ENCODE measurements at regions of chr3 and their contacts with region 1.

Region 1: DNA sequence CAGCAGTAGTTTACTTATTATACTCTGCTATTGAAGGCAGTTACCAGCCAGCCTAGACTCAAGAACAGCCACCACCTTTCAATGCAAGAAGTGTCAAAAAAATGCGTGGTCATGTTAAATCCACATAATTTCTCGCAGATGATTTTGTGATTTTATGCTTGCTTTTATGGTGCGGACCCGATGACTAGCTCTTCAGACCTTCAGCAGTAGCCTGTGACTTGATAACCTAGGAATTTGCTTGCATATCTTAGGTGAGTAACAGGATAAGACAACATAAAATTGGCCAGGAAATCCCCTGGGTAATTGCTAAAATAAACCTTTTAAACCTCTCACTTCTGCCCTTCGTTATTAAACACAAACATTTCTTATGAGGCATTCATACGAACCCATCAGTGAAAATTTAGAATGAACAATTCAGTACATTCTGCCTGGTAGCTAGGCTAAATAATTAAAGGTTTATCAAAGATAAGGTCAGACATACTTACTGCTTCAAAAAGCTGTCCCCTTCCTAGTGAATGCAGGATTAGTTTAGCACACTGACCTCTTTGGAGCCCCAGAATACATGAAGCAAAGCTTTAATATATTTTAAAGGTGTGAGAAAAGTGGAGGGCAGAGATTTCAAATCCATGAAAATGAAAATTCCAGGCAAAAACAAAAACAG is 798.8 kb downstream of the OTOL1 start:
- DNase-seq: peak; percentile 97
- ATAC-seq: peak; percentile 97
- H3K4me3 ChIP-seq: peak overlapping the region; percentile 31; the same call in 1 of the 2 replicates
- H3K27ac ChIP-seq: peak overlapping the region; percentile 84
- H3K4me1 ChIP-seq: peaks cover 40% of the 10 kb centered on the region
- H3K27me3 ChIP-seq: no peaks in the 10 kb centered on the region
- CTCF ChIP-seq: no peak

Region 2: DNA sequence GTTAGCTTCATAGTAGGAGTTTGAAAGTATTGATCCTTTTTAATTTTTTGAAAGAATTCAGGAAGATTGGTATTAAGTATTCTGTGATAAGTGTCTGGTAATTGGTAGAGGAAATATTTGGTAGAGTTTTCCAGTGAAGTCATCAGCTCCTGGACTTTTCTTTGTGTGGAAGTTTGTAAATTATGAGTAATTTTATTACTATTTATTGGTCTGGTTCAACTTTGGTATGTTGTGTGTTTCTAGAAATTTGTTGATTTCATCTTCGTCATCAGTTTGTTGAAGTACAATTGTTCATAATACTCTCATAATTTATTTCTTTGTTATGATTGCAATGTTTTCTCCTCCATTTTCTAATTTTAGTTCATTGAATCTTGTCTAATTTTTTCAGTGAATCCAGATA is 33.2 kb after region 1 on chr3:
- CTCF ChIA-PET with region 1: no interaction called
- POLR2A ChIA-PET with region 1: no interaction called
- intact Hi-C with region 1: loop called (anchors 2 kb)
- DNase-seq: peak; percentile 59
- ATAC-seq: peak; percentile 53
- H3K4me3 ChIP-seq: no peak overlapping the region
- H3K27ac ChIP-seq: peak overlapping the region; percentile 13
- H3K4me1 ChIP-seq: peaks cover 31% of the 10 kb centered on the region
- H3K27me3 ChIP-seq: no peaks in the 10 kb centered on the region
- CTCF ChIP-seq: no peak

Region 3: GRCh38 chr3:162376761-162377160 is 81.3 kb after region 1 on chr3:
- CTCF ChIA-PET with region 1: no interaction called
- POLR2A ChIA-PET with region 1: no interaction called
- intact Hi-C with region 1: loop called (anchors 5 kb)
- DNase-seq: peak; percentile 69
- ATAC-seq: peak; percentile 75
- H3K4me3 ChIP-seq: no peak overlapping the region; the same call in 1 of the 2 replicates
- H3K27ac ChIP-seq: peak overlapping the region; percentile 66
- H3K4me1 ChIP-seq: peaks cover 13% of the 10 kb centered on the region
- H3K27me3 ChIP-seq: no peaks in the 10 kb centered on the region
- CTCF ChIP-seq: no peak

Region 4: GRCh38 chr3:162390891-162391290 is 95.4 kb after region 1 on chr3:
- CTCF ChIA-PET with region 1: no interaction called
- POLR2A ChIA-PET with region 1: no interaction called
- intact Hi-C with region 1: loop called (anchors 2 kb)
- DNase-seq: peak; percentile 94
- ATAC-seq: peak; percentile 94
- H3K4me3 ChIP-seq: peak overlapping the region; percentile 45
- H3K27ac ChIP-seq: peak overlapping the region; percentile 95
- H3K4me1 ChIP-seq: peaks cover 25% of the 10 kb centered on the region
- H3K27me3 ChIP-seq: no peaks in the 10 kb centered on the region
- CTCF ChIP-seq: no peak

Region 5: GRCh38 chr3:162418153-162418552 is 122.7 kb after region 1 on chr3:
- CTCF ChIA-PET with region 1: no interaction called
- POLR2A ChIA-PET with region 1: no interaction called
- intact Hi-C with region 1: no loop called
- DNase-seq: no peak
- ATAC-seq: no peak
- H3K4me3 ChIP-seq: no peak overlapping the region
- H3K27ac ChIP-seq: no peak overlapping the region
- H3K4me1 ChIP-seq: no peaks in the 10 kb centered on the region
- H3K27me3 ChIP-seq: no peaks in the 10 kb centered on the region
- CTCF ChIP-seq: no peak

Region 6: GRCh38 chr3:162586591-162586990 is 291.1 kb after region 1 on chr3:
- CTCF ChIA-PET with region 1: no interaction called
- POLR2A ChIA-PET with region 1: no interaction called
- intact Hi-C with region 1: loop called (anchors 10 kb)
- DNase-seq: peak; percentile 80
- ATAC-seq: peak; percentile 90
- H3K4me3 ChIP-seq: no peak overlapping the region
- H3K27ac ChIP-seq: no peak overlapping the region
- H3K4me1 ChIP-seq: peaks cover 6% of the 10 kb centered on the region; the same call in 1 of the 2 replicates
- H3K27me3 ChIP-seq: no peaks in the 10 kb centered on the region
- CTCF ChIP-seq: no peak